ENCODE measurements at regions of chr9 and their contacts with region 1.

Region 1: GRCh38 chr9:35237311-35237710 is 75.5 kb downstream of the UNC13B start:
- DNase-seq: no peak
- ATAC-seq: no peak
- H3K4me3 ChIP-seq: no peak overlapping the region
- H3K27ac ChIP-seq: no peak overlapping the region
- H3K4me1 ChIP-seq: peaks cover 21% of the 10 kb centered on the region
- H3K27me3 ChIP-seq: no peaks in the 10 kb centered on the region
- CTCF ChIP-seq: no peak

Region 2: DNA sequence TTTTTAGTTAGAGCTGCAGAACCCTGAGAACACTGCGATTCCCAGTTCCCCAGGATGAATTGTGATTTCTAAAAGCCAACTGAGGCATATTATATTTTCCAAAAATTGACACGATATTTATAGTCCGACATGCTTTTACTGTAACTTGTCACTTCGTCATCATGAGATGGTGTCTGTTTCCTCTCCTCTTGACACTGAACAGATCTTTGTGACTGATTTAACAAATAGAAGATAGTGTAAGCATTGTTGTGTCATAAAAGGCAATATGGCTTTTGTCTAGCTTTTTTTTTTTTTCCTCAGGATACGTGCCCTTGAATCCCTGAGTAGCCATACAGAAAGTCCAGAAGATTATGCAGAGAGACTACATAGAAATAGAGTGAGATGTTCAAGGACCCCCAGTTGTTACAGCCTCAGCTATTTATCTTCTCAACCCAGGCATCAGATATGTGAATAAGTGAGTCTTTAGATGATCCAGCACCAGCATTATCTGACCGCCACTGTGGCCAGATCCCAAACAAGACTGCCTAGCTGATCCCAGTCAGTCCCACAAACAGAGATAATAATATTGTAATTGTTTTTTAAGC is 499.5 kb before region 1 on chr9:
- intact Hi-C with region 1: no loop called
- DNase-seq: no peak
- ATAC-seq: no peak
- H3K4me3 ChIP-seq: no peak overlapping the region
- H3K27ac ChIP-seq: no peak overlapping the region
- H3K4me1 ChIP-seq: no peaks in the 10 kb centered on the region
- H3K27me3 ChIP-seq: no peaks in the 10 kb centered on the region
- CTCF ChIP-seq: no peak

Region 3: GRCh38 chr9:35293378-35293964 is 56.2 kb after region 1 on chr9:
- intact Hi-C with region 1: loop called in 1 of 2 experiments (anchors 10 kb)
- DNase-seq: no peak
- ATAC-seq: no peak
- H3K4me3 ChIP-seq: no peak overlapping the region
- H3K27ac ChIP-seq: no peak overlapping the region
- H3K4me1 ChIP-seq: peaks cover 29% of the 10 kb centered on the region
- H3K27me3 ChIP-seq: no peaks in the 10 kb centered on the region
- CTCF ChIP-seq: no peak

Region 4: DNA sequence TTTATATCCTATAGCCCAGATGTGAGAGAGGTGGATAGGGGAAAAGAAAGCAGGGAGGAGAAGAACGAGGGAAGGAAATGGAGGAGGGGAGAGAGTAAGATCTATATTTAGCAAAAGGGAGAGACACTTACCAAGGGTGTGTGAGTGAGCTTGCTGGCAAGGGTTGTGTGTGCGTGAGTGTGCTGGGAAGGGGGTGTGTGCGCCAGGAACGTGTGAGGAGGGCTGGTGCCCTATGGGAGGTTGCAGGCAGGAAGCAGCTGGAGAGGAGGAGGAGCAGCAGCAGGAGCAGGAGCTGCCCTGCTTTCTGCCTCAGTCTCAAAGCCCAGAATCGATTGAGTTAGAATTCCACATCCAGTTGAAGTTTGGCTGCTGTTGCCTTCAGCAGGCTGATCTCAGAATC is 104.3 kb after region 1 on chr9:
- intact Hi-C with region 1: no loop called
- DNase-seq: peak; percentile 53 to 88
- ATAC-seq: peak; percentile 95 to 99 (median 98)
- H3K4me3 ChIP-seq: peak overlapping the region; percentile 58
- H3K27ac ChIP-seq: peak overlapping the region; percentile 87
- H3K4me1 ChIP-seq: peaks cover 31% of the 10 kb centered on the region
- H3K27me3 ChIP-seq: no peaks in the 10 kb centered on the region
- CTCF ChIP-seq: no peak